OCI-LY7 (cell line): ENCODE measurements at regions of chr10 and their contacts with region 1.

Region 1: DNA sequence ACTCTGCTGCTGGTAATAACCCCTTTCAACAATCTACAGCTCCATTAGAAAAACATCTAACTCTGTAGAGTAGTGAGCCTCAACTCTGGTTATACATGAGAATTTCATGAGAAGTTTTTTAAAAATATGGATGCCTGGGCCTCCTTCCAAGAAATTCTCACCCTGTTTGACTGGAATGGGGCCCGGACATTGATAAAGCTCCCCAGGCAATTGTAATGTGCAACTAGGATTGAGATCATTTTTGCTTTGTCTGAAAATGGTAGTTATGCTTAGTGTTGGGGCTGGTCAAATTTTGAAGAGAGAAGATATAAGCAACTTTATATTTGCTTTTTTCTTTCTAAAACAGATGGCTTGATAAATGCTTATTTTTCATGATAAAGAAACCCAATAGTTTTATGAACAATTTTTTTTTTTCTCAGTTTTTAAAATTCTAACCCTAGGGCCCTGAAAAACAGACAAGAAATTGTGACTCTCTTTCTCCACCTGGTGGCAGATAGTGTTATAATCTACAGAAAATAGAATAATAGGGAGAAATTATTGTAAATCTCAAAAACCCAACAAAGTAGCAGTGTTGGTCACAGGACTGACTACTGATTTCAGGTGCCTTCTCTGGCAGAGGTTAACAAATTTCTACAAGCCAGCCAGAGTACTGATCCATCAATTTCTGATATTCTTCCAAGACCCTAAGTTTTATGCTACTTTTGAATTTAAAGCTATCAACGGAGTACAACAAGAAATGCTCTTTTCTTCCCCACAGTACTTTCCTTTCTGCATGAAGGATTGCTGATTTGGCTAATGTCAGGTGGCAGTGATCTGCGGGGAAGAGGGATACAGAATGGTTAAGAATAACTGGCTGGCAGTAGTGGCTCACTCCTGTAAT is 174.8 kb downstream of the DKK1 start:
- DNase-seq: peak; percentile 36
- H3K4me3 ChIP-seq: no peak overlapping the region
- H3K27ac ChIP-seq: no peak overlapping the region
- H3K4me1 ChIP-seq: no peaks in the 10 kb centered on the region
- CTCF ChIP-seq: peak; percentile 83

Region 2: GRCh38 chr10:52368741-52369140 is 120.1 kb before region 1 on chr10:
- CTCF ChIA-PET with region 1: no interaction called
- POLR2A ChIA-PET with region 1: interaction called, 4 read pairs
- intact Hi-C with region 1: loop called (anchors 5 kb)
- DNase-seq: no peak
- H3K4me3 ChIP-seq: no peak overlapping the region
- H3K27ac ChIP-seq: no peak overlapping the region
- H3K4me1 ChIP-seq: no peaks in the 10 kb centered on the region
- CTCF ChIP-seq: no peak